Caco-2 (cell line): ENCODE measurements at regions of chr17 and their contacts with region 1.

Region 1: GRCh38 chr17:63697341-63698286 is 2.3 kb downstream of the LIMD2 start:
- DNase-seq: peak in 1 of 2 experiments; percentile 69
- H3K4me3 ChIP-seq: no peak overlapping the region
- H3K4me3 Mint-ChIP-seq: peak overlapping the region; percentile 65
- H3K27ac Mint-ChIP-seq: no peak overlapping the region
- H3K4me1 ChIP-seq: no peaks in the 10 kb centered on the region
- H3K4me1 Mint-ChIP-seq: no peaks in the 10 kb centered on the region
- H3K27me3 ChIP-seq: no peaks in the 10 kb centered on the region
- H3K27me3 Mint-ChIP-seq: no peaks in the 10 kb centered on the region
- CTCF ChIP-seq: peak; percentile 29 to 56

Region 2: GRCh38 chr17:63741221-63742049 is 43.8 kb after region 1 on chr17 and contains the start of gene STRADA:
- CTCF ChIA-PET with region 1: no interaction called
- POLR2A ChIA-PET with region 1: no interaction called
- intact Hi-C with region 1: loop called (anchors 5 kb)
- DNase-seq: peak; percentile 100
- H3K4me3 ChIP-seq: peak within 1 kb of the TSS; percentile 83
- H3K4me3 Mint-ChIP-seq: peak within 1 kb of the TSS; percentile 96
- H3K27ac Mint-ChIP-seq: peak within 1 kb of the TSS; percentile 96
- H3K4me1 ChIP-seq: peaks cover 9% of the 10 kb centered on the region
- H3K4me1 Mint-ChIP-seq: peaks cover 6% of the 10 kb centered on the region
- H3K27me3 ChIP-seq: no peaks in the 10 kb centered on the region
- H3K27me3 Mint-ChIP-seq: no peaks in the 10 kb centered on the region
- CTCF ChIP-seq: no peak
- total RNA-seq, gene STRADA: 23.4 and 24.7 TPM in 2 replicates